CD8-positive, alpha-beta T cell (primary cell): ENCODE measurements at regions of chr17 and their contacts with region 1.

Region 1: DNA sequence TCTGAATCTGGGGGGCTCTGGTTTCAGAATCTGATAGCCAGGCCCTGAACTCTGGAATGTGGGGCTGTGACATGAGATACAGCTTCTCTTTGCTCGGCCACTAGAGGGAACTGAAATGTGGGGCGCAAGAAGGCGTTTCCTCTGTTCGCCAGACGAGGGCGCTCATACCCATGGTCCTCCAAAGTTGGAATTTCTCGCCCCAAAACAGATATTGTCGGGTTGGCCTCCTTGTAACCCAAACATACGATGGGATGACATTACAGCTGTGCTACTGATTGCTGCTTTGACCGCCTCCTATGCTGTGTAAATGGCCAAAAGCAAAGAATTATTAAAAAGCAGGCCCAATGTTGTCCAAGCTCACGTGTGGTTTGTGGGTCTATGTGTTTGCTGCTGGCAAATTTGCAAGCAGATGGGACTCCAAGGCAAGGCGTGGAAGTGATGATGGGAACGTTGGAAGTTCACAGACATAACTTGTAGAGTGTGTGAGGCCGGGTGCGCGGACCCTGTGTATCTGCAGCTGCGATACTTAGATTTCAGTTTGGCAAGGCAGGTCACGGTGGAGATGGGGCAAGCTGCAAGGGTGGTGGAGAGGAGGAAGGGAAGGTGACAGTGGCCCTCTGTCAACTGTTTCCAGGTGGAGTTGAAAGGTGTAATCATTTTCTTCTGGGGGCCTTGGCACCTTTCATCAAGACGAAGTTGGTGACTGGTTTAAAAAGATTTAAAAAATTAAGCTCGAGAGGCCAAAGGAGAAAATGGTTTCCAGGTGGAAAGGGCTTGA is 13.0 kb upstream of the MSI2 start:
- DNase-seq: peak; percentile 60 to 86 (median 77)
- ATAC-seq: peak; percentile 97
- H3K4me3 ChIP-seq: no peak overlapping the region
- H3K4me3 Mint-ChIP-seq: no peak overlapping the region
- H3K27ac ChIP-seq: no peak overlapping the region
- H3K27ac Mint-ChIP-seq: no peak overlapping the region
- H3K4me1 ChIP-seq: no peaks in the 10 kb centered on the region
- H3K4me1 Mint-ChIP-seq: peaks cover 2% of the 10 kb centered on the region
- H3K27me3 ChIP-seq: no peaks in the 10 kb centered on the region
- H3K27me3 Mint-ChIP-seq: no peaks in the 10 kb centered on the region
- CTCF ChIP-seq: peak; percentile 99

Region 2: DNA sequence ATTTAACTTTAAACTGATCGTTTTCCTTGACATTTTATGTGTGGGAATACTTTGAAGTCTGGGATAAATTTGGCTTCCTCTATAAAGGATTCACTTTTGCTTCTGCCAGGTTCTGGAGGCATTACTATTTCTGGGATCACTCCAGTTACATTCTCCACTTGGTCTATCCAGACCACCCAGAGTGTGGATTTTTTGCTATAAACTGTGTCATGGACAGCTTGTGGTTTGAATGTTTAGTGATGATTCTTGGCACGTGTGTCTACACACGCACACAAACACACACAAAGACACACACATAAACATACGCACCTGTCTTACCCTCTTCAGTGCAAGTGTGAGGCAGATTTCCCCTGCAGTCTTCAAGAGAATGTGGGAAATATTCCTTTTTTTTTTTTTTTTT is 14.4 kb before region 1 on chr17:
- CTCF ChIA-PET with region 1: interaction called, 21 read pairs
- POLR2A ChIA-PET with region 1: no interaction called
- intact Hi-C with region 1: no loop called
- DNase-seq: no peak
- ATAC-seq: no peak
- H3K4me3 ChIP-seq: no peak overlapping the region
- H3K4me3 Mint-ChIP-seq: no peak overlapping the region
- H3K27ac ChIP-seq: no peak overlapping the region
- H3K27ac Mint-ChIP-seq: no peak overlapping the region
- H3K4me1 ChIP-seq: no peaks in the 10 kb centered on the region
- H3K4me1 Mint-ChIP-seq: no peaks in the 10 kb centered on the region
- H3K27me3 ChIP-seq: no peaks in the 10 kb centered on the region
- H3K27me3 Mint-ChIP-seq: peaks cover 20% of the 10 kb centered on the region
- CTCF ChIP-seq: no peak

Region 3: GRCh38 chr17:57284984-57285646 is 41.8 kb after region 1 on chr17:
- CTCF ChIA-PET with region 1: interaction called, 30 read pairs
- POLR2A ChIA-PET with region 1: no interaction called
- intact Hi-C with region 1: loop called in 1 of 2 experiments (anchors 5 kb)
- DNase-seq: peak in 6 of 9 experiments; percentile 16 to 58 (median 36)
- ATAC-seq: peak; percentile 24
- H3K4me3 ChIP-seq: no peak overlapping the region
- H3K4me3 Mint-ChIP-seq: peak overlapping the region; percentile 50
- H3K27ac ChIP-seq: peak overlapping the region in 1 of 2 experiments; percentile 1
- H3K27ac Mint-ChIP-seq: peak overlapping the region; percentile 66
- H3K4me1 ChIP-seq: peaks cover 39% of the 10 kb centered on the region
- H3K4me1 Mint-ChIP-seq: peaks cover 79% of the 10 kb centered on the region
- H3K27me3 ChIP-seq: no peaks in the 10 kb centered on the region
- H3K27me3 Mint-ChIP-seq: no peaks in the 10 kb centered on the region
- CTCF ChIP-seq: no peak

Region 4: GRCh38 chr17:57379237-57379894 is 136.0 kb after region 1 on chr17:
- CTCF ChIA-PET with region 1: no interaction called
- POLR2A ChIA-PET with region 1: no interaction called
- intact Hi-C with region 1: no loop called
- DNase-seq: no peak
- ATAC-seq: no peak
- H3K4me3 ChIP-seq: no peak overlapping the region
- H3K4me3 Mint-ChIP-seq: no peak overlapping the region
- H3K27ac ChIP-seq: no peak overlapping the region
- H3K27ac Mint-ChIP-seq: no peak overlapping the region
- H3K4me1 ChIP-seq: no peaks in the 10 kb centered on the region
- H3K4me1 Mint-ChIP-seq: peaks cover 27% of the 10 kb centered on the region
- H3K27me3 ChIP-seq: no peaks in the 10 kb centered on the region
- H3K27me3 Mint-ChIP-seq: no peaks in the 10 kb centered on the region
- CTCF ChIP-seq: no peak

Region 5: DNA sequence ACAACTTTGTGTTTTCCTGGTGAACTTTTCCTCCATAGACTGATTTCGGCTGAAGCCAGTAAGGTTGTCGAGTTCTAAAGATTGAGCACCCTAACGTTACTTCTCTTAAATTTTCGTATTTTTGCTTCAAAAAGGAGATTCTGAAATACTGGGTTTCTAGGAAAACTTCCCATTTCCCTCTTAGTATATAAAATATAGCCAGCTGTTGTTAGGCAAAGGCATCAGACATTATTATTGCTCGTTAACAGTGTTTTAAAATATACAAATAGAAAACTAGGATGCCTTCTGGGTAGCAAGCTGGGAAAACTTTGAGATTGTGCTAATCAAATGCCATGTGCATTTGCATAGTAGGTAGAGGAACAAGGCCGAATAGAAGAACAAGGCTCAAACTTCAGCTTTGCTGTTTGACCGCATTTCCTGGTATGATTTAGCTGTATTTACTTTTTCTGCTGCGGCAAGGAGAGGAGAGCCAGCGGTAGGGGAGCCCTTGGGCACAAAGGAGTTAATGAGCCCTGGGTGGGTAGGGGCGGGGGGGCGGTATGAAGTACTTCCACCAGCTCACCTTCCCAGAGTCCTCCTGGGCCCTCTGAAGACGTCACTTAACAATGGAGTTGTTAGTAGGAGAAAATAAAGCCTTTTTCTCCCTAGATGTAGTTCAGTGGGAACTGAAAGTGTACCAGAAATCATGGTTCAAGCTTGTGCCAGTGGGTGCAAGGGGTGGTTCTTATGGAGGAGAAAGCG is 164.9 kb after region 1 on chr17:
- CTCF ChIA-PET with region 1: interaction called, 13 read pairs
- POLR2A ChIA-PET with region 1: no interaction called
- intact Hi-C with region 1: loop called (anchors 5 kb)
- DNase-seq: peak in 5 of 9 experiments; percentile 15 to 51 (median 46)
- ATAC-seq: peak; percentile 84
- H3K4me3 ChIP-seq: no peak overlapping the region
- H3K4me3 Mint-ChIP-seq: peak overlapping the region; percentile 32
- H3K27ac ChIP-seq: no peak overlapping the region
- H3K27ac Mint-ChIP-seq: peak overlapping the region; percentile 53
- H3K4me1 ChIP-seq: peaks cover 29% of the 10 kb centered on the region
- H3K4me1 Mint-ChIP-seq: peaks cover 56% of the 10 kb centered on the region
- H3K27me3 ChIP-seq: no peaks in the 10 kb centered on the region
- H3K27me3 Mint-ChIP-seq: no peaks in the 10 kb centered on the region
- CTCF ChIP-seq: no peak

Region 6: DNA sequence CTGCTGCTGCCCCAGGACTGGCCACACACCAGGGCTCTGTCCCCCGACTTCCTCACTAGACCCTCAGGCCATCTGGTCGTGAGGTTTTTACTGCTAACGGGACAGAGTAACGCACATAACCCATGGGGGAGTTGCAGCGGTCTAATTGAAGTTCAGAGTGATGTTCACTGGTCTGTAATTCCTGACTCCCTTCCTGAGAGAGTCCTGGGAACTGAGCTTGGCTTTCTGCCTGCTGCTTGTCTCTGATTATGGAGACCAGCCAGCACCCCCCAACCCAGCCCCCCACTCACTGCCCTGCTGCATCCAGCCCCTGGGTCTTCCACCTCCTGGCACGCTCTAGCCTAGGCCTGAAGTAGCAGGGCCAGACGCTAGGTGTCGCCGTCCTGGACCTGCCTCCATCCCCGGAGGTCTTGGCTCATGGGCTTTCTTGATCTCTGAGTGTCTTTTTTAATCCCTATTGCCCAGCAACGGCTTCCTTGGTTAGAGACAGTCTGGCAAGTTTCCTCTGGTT is 308.8 kb after region 1 on chr17:
- CTCF ChIA-PET with region 1: interaction called, 12 read pairs
- POLR2A ChIA-PET with region 1: no interaction called
- intact Hi-C with region 1: no loop called
- DNase-seq: peak in 6 of 9 experiments; percentile 8 to 60 (median 34)
- ATAC-seq: peak; percentile 63
- H3K4me3 ChIP-seq: no peak overlapping the region
- H3K4me3 Mint-ChIP-seq: no peak overlapping the region
- H3K27ac ChIP-seq: no peak overlapping the region
- H3K27ac Mint-ChIP-seq: no peak overlapping the region
- H3K4me1 ChIP-seq: peaks cover 26% of the 10 kb centered on the region
- H3K4me1 Mint-ChIP-seq: peaks cover 57% of the 10 kb centered on the region
- H3K27me3 ChIP-seq: no peaks in the 10 kb centered on the region
- H3K27me3 Mint-ChIP-seq: no peaks in the 10 kb centered on the region
- CTCF ChIP-seq: no peak

Region 7: GRCh38 chr17:57747221-57748017 is 504.1 kb after region 1 on chr17:
- CTCF ChIA-PET with region 1: interaction called, 56 read pairs
- POLR2A ChIA-PET with region 1: no interaction called
- intact Hi-C with region 1: loop called (anchors 1 kb)
- DNase-seq: peak in 7 of 9 experiments; percentile 3 to 77 (median 52)
- ATAC-seq: peak; percentile 77
- H3K4me3 ChIP-seq: no peak overlapping the region
- H3K4me3 Mint-ChIP-seq: no peak overlapping the region
- H3K27ac ChIP-seq: no peak overlapping the region
- H3K27ac Mint-ChIP-seq: no peak overlapping the region
- H3K4me1 ChIP-seq: peaks cover 6% of the 10 kb centered on the region
- H3K4me1 Mint-ChIP-seq: peaks cover 10% of the 10 kb centered on the region
- H3K27me3 ChIP-seq: no peaks in the 10 kb centered on the region
- H3K27me3 Mint-ChIP-seq: no peaks in the 10 kb centered on the region
- CTCF ChIP-seq: peak; percentile 81